ENCODE measurements at regions of chr7 and their contacts with region 1.

Region 1: GRCh38 chr7:100428199-100428966 is at the start of gene ZCWPW1:
- DNase-seq: peak; percentile 96 to 98 (median 97)
- H3K4me3 ChIP-seq: peak within 1 kb of the TSS; percentile 70
- H3K27ac ChIP-seq: peak within 1 kb of the TSS; percentile 98 to 99
- H3K4me1 ChIP-seq: peaks cover 12% of the 10 kb centered on the region
- H3K27me3 ChIP-seq: no peaks in the 10 kb centered on the region
- CTCF ChIP-seq: peak in 1 of 3 donors; percentile 17
- EP300 ChIP-seq: peak; percentile 28
- POLR2A ChIP-seq: peak; percentile 100
- total RNA-seq, gene ZCWPW1: 2.6 to 6.5 (median 5.0) TPM

Region 2: GRCh38 chr7:100148559-100149350 is 279.6 kb before region 1 on chr7 and contains the start of gene LAMTOR4:
- intact Hi-C with region 1: loop called in 1 of 4 experiments (anchors 5 kb)
- DNase-seq: peak; percentile 98 to 99 (median 99)
- H3K4me3 ChIP-seq: peak within 1 kb of the TSS; percentile 93
- H3K27ac ChIP-seq: peak within 1 kb of the TSS; percentile 1 to 87
- H3K4me1 ChIP-seq: no peaks in the 10 kb centered on the region
- H3K27me3 ChIP-seq: no peaks in the 10 kb centered on the region
- CTCF ChIP-seq: no peak
- EP300 ChIP-seq: no peak
- POLR2A ChIP-seq: peak; percentile 60
- total RNA-seq, gene LAMTOR4: 101 to 245 (median 108) TPM